Right ventricle myocardium inferior (tissue), 1 donor: ENCODE measurements at regions of chr12 and their contacts with region 1.

Region 1: GRCh38 chr12:104215638-104216297 is at the start of gene TXNRD1:
- DNase-seq: peak; percentile 92
- ATAC-seq: peak; percentile 93
- total RNA-seq, gene TXNRD1: 89.3 TPM

Region 2: DNA sequence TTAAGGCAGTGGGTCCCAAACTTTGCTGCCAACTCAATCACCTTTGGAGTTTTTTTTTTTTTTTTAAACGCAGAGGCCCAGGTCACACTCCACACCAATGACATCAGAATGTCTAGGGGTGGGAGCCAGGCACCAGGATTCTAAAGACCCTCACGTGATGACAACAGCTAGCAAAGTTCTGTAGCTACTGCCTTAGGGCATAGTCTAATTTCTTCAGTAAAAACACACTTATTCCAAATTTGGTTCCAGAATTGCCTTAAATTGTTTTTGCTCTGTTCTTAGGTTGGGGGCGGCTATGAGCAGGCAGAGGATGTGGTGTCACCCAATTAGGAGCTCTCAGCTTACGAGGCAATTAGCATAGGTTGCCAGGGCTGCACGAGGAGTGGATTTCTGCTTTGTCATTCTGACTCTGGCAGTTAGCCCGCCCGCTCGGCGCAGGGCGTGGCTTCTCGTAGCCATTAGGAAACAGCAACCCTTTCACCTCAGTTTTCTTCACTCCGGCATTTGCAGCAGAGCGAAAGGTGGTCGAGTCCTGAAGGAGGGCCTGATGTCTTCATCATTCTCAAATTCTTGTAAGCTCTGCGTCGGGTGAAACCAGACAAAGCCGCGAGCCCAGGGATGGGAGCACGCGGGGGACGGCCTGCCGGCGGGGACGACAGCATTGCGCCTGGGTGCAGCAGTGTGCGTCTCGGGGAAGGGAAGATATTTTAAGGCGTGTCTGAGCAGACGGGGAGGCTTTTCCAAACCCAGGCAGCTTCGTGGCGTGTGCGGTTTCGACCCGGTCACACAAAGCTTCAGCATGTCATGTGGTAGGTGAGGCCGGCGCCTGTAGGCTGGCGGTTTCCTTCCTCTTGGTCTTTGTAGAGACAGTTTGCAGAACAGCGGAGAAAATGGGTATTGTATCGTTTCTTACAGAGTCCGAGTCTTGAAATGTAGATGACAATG is 71.0 kb after region 1 on chr12:
- intact Hi-C with region 1: loop called (anchors 2 kb)
- DNase-seq: peak; percentile 96
- ATAC-seq: peak; percentile 94

Region 3: GRCh38 chr12:104303538-104304151 is 87.9 kb after region 1 on chr12 and contains the start of gene EID3:
- intact Hi-C with region 1: loop called (anchors 2 kb)
- DNase-seq: peak; percentile 95
- ATAC-seq: peak; percentile 100
- total RNA-seq, gene EID3: 0.49 TPM

Region 4: DNA sequence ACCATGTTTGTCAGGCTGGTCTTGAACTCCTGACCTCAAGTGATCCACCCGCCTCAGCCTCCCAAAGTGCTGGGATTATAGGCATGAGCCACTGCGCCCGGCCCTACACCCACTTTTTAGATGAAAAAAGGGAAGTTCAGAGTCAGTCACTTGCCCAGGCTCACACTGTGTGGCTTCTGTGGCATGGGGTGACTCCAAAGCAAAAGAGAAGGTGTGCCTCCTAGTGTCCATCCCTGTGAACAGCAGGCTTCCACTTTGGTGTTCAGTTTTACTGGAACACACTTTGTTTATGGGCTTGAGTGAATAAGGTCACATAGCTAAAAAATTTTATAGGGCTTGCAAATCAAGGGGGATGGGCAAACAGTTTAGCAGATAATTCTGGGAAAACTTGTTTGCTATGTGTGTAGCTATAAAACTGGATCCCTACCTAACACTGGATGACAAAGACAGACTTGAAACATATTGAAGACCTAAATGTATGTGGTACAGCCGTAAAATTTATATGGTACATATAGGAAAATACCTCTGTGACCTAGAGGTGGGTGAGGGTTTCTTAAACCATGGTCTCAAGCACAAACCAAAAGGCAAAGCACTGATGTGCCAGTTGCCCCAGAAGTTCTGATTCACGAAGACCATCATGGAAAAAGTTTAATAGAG is 142.7 kb after region 1 on chr12:
- intact Hi-C with region 1: loop called (anchors 5 kb)
- DNase-seq: peak; percentile 75
- ATAC-seq: peak; percentile 79